Esophagus squamous epithelium (tissue), 5 donors: ENCODE measurements at regions of chr5 and their contacts with region 1.

Region 1: DNA sequence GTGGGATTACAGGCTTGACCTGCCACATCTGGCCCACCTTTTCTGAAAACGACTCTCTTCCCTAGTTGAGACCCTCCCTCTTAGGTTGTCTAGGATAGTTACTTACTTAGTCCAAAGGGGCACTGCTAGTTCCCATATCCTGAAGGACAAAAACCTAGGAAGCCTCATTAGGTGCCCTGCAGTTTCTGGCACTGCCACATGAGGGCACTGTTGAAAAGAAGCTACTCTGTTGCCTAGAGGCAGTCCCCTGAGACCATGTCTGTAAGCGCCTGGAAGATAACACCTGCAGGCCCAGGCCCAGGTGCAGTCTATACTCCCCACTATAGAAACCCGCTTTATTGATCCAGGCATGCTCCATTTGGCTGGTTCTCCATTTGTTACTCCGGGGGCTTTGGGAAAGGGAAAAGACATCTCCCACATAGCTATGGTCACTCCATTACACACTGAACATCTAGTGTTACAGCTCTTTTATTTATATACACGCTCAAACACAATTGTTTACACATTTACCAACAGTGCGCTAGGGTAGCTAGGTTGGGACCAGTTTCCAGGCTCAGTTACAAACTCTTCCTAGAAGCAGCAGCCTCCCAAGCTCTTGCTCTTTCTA is 73.4 kb upstream of the PPARGC1B start:
- DNase-seq: no peak
- H3K4me3 ChIP-seq: no peak overlapping the region
- H3K27ac ChIP-seq: no peak overlapping the region
- H3K4me1 ChIP-seq: no peaks in the 10 kb centered on the region
- H3K27me3 ChIP-seq: no peaks in the 10 kb centered on the region
- CTCF ChIP-seq: peak in 5 of 6 experiments; percentile 62 to 90 (median 67)
- POLR2A ChIP-seq: no peak

Region 2: GRCh38 chr5:149596713-149597112 is 60.0 kb before region 1 on chr5:
- intact Hi-C with region 1: no loop called
- DNase-seq: no peak
- H3K4me3 ChIP-seq: no peak overlapping the region
- H3K27ac ChIP-seq: peak overlapping the region; percentile 56 to 88 (median 74)
- H3K4me1 ChIP-seq: peaks cover 8 to 42% (median 17%) of the 10 kb centered on the region in 3 donors
- H3K27me3 ChIP-seq: no peaks in the 10 kb centered on the region
- CTCF ChIP-seq: no peak
- POLR2A ChIP-seq: no peak

Region 3: DNA sequence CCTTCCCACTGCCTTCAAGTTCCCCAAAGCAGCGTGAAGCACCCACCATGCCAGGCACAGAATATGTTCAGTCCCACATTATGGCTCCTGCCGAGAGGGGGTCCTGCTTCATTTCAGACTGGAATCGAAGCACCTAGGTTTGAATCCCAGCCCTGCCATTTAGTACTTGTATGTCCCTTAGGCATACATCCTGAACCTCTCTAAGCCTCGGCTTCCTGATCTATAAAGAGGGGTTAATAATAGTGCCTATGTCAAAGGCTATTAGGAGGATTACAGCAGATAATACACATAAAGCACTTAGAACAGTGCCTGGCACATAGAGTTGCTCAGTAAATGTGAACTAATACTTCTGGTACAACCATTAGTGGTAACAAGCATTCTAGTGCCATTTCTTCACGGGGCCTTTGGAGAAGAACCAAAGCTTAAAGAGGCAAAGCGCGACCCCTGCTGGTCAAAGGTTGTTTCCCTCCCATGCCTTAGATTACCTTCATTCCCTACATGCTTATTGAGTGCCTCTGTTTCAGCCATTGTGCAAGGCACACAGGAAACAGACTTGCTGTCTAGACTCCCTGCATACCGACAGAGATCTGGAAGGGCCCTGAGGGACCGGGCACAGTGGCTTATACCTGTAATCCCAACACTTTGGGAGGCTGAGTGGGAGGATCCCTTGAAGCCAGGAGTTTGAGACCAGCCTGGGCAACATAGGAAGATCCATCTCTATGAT is 171.6 kb after region 1 on chr5:
- intact Hi-C with region 1: loop called (anchors 5 kb)
- DNase-seq: no peak
- H3K4me3 ChIP-seq: no peak overlapping the region
- H3K27ac ChIP-seq: peak overlapping the region; percentile 23 to 91 (median 67)
- H3K4me1 ChIP-seq: peaks cover 0 to 51% (median 24%) of the 10 kb centered on the region in 3 donors
- H3K27me3 ChIP-seq: no peaks in the 10 kb centered on the region
- CTCF ChIP-seq: peak; percentile 74 to 96 (median 92)
- POLR2A ChIP-seq: no peak

Region 4: DNA sequence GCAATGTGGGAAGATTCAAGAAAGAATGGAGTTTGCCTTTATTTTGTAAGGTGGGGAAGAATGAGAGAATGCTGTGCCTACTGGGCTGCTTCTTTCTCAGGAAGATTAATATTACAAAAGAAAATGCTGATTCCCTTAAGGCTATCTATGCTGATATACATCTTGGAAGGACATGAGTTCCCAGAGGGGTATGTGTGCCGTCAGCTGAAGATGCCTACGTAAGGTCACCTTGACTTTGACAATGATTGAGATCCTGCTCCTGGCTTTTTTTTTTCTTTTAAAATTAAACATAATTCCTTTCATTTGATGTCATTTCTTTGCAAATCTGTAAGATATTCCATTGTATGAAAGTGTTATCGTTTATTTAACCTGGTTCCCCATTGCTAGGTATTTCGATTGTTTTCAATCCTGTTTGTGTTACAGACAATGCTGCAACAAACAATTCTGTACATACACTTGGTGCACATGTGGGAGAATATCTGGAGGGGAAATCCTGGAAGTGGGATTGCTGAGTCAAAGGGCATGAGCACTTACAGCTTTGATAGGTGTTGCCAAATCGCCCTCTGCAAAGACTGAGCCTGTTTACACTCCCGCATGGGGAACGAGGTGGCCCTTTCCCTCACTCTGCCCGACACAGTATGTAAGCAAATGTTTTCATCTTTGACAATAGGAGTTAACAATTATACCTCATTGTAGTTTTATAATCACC is 221.5 kb after region 1 on chr5:
- intact Hi-C with region 1: no loop called
- DNase-seq: no peak
- H3K4me3 ChIP-seq: no peak overlapping the region
- H3K27ac ChIP-seq: peak overlapping the region in 1 of 4 donors; percentile 30
- H3K4me1 ChIP-seq: peaks cover 0 to 35% (median 14%) of the 10 kb centered on the region in 3 donors
- H3K27me3 ChIP-seq: no peaks in the 10 kb centered on the region
- CTCF ChIP-seq: no peak
- POLR2A ChIP-seq: no peak

Region 5: GRCh38 chr5:149969181-149969930 is 312.7 kb after region 1 on chr5:
- intact Hi-C with region 1: loop called (anchors 5 kb)
- DNase-seq: no peak
- H3K4me3 ChIP-seq: no peak overlapping the region
- H3K27ac ChIP-seq: no peak overlapping the region
- H3K4me1 ChIP-seq: no peaks in the 10 kb centered on the region
- H3K27me3 ChIP-seq: no peaks in the 10 kb centered on the region
- CTCF ChIP-seq: no peak
- POLR2A ChIP-seq: no peak